K562 (cell line): ENCODE measurements at regions of chr14 and their contacts with region 1.

Region 1: GRCh38 chr14:77067632-77068514 is 30.2 kb upstream of the CIPC start:
- DNase-seq: peak; percentile 47 to 61 (median 53)
- ATAC-seq: peak; percentile 88
- H3K4me3 ChIP-seq: no peak overlapping the region
- H3K27ac ChIP-seq: no peak overlapping the region
- H3K4me1 ChIP-seq: peaks cover 0 to 8% of the 10 kb centered on the region in 2 experiments; a peak in 3 of 5 replicates
- H3K27me3 ChIP-seq: peaks cover 0 to 12% of the 10 kb centered on the region in 2 experiments; a peak in 2 of 5 replicates
- CTCF ChIP-seq: peak; percentile 75 to 81 (median 76)
- EP300 ChIP-seq: no peak
- POLR2A ChIP-seq: no peak
- RAD21 ChIP-seq: peak; percentile 74 to 91

Region 2: GRCh38 chr14:76710056-76711010 is 357.5 kb before region 1 on chr14:
- CTCF ChIA-PET with region 1: no interaction called
- POLR2A ChIA-PET with region 1: no interaction called
- in situ Hi-C with region 1: loop called (anchors 25 kb)
- intact Hi-C with region 1: no loop called
- DNase-seq: peak; percentile 22 to 59 (median 44)
- ATAC-seq: peak; percentile 76
- H3K4me3 ChIP-seq: no peak overlapping the region
- H3K27ac ChIP-seq: no peak overlapping the region
- H3K4me1 ChIP-seq: peaks cover 0 to 4% of the 10 kb centered on the region in 2 experiments; a peak in 3 of 5 replicates
- H3K27me3 ChIP-seq: peaks cover 2 to 20% of the 10 kb centered on the region in 2 experiments; a peak in 4 of 5 replicates
- CTCF ChIP-seq: peak; percentile 63 to 76 (median 64)
- EP300 ChIP-seq: no peak
- POLR2A ChIP-seq: no peak
- RAD21 ChIP-seq: peak; percentile 73 to 83

Region 3: GRCh38 chr14:76882651-76883050 is 185.2 kb before region 1 on chr14:
- CTCF ChIA-PET with region 1: interaction called, 57 read pairs
- POLR2A ChIA-PET with region 1: interaction called, 4 read pairs
- in situ Hi-C with region 1: loop called (anchors 5 kb)
- intact Hi-C with region 1: no loop called
- DNase-seq: no peak
- ATAC-seq: no peak
- H3K4me3 ChIP-seq: no peak overlapping the region
- H3K27ac ChIP-seq: no peak overlapping the region
- H3K4me1 ChIP-seq: peaks cover 0 to 8% of the 10 kb centered on the region in 2 experiments; a peak in 1 of 5 replicates
- H3K27me3 ChIP-seq: peaks cover 4 to 39% of the 10 kb centered on the region in 2 experiments; a peak in 3 of 5 replicates
- CTCF ChIP-seq: no peak
- EP300 ChIP-seq: no peak
- POLR2A ChIP-seq: no peak
- RAD21 ChIP-seq: no peak

Region 4: DNA sequence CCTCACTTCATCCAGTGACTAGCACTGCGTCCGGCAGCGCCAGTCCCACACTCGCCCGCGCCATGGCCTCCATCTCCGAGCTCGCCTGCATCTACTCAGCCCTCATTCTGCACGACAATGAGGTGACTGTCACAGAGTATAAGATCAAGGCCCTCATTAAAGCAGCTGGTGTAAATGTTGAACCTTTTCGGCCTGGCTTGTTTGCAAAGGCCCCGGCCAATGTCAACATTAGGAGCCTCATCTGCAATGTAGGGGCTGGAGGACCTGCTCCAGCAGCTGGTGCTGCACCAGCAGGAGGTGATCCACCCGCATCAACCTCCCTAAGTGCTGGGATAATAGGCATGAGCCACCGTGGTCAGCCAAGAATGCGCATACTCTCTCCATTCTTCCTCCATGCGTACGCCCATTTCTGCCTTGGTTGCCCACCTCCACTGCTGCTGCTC is 99.2 kb before region 1 on chr14:
- CTCF ChIA-PET with region 1: no interaction called
- POLR2A ChIA-PET with region 1: no interaction called
- in situ Hi-C with region 1: loop called (anchors 5 kb)
- intact Hi-C with region 1: no loop called
- DNase-seq: no peak
- ATAC-seq: no peak
- H3K4me3 ChIP-seq: no peak overlapping the region
- H3K27ac ChIP-seq: no peak overlapping the region
- H3K4me1 ChIP-seq: peaks cover 0 to 12% of the 10 kb centered on the region in 2 experiments; a peak in 4 of 5 replicates
- H3K27me3 ChIP-seq: no peaks in the 10 kb centered on the region
- CTCF ChIP-seq: no peak
- EP300 ChIP-seq: no peak
- POLR2A ChIP-seq: no peak
- RAD21 ChIP-seq: no peak

Region 5: DNA sequence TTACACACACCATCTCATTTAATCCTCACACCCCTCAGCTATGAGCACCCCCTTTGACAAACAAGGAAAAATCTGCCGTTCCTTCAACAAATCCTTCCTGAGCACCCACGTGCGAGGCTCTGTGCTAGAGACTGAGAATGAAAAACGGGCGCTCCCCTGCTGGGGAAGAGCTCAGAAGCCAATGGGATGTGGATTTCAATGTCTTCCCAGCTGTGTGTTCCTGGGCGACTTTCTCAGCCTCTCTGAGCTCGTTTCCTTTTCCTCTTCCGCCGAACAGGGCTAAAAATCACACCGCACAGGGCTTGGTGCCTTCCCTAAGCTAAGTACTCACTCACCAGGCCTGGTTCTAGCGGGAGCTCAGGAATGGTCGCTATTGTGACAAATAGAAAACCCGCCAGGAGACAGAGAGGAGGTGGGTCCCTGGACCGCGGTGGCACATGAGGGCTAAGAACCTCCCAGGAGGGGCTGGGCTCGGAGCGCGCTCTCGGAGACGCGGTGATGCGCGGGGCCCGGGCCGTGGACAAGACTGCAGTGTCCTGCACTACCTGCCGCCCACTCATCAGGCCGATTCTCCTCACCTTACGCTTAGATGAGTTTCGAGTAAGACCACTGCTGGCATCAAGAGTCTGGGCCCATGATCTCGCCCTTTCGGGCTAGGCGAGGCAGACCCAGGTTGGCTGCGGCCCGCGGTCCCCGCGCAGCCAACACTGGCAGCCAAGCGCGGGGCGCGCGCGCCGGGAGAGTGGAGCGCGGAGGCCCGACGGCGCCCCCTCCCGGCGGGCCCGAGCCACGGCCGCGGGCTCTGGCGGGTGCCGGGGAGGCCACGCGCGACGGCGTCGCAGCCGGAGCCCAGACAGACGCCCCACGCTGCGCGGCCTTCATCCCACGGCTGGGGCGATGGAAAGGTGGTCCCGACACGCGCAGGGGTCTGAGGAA is 56.7 kb after region 1 on chr14:
- CTCF ChIA-PET with region 1: interaction called, 10 read pairs
- POLR2A ChIA-PET with region 1: no interaction called
- in situ Hi-C with region 1: no loop called
- intact Hi-C with region 1: no loop called
- DNase-seq: peak; percentile 39 to 71 (median 62)
- ATAC-seq: peak; percentile 93
- H3K4me3 ChIP-seq: peak overlapping the region; percentile 28
- H3K27ac ChIP-seq: no peak overlapping the region
- H3K4me1 ChIP-seq: peaks cover 0 to 22% of the 10 kb centered on the region in 2 experiments; a peak in 4 of 5 replicates
- H3K27me3 ChIP-seq: peaks cover 0 to 26% of the 10 kb centered on the region in 2 experiments; a peak in 2 of 5 replicates
- CTCF ChIP-seq: peak; percentile 41 to 57 (median 43); a peak in 4 of 6 replicates
- EP300 ChIP-seq: no peak
- POLR2A ChIP-seq: no peak
- RAD21 ChIP-seq: peak in 1 of 2 experiments; percentile 51; a peak in 2 of 4 replicates